Left colon (tissue), 2 donors: ENCODE measurements at regions of chr7 and their contacts with region 1.

Region 1: GRCh38 chr7:120272261-120272660 is 714 bp upstream of the KCND2 start:
- DNase-seq: no peak
- ATAC-seq: no peak

Region 2: GRCh38 chr7:119935418-119936025 is 336.7 kb before region 1 on chr7:
- intact Hi-C with region 1: loop called in 1 of 2 experiments (anchors 10 kb)
- DNase-seq: no peak
- ATAC-seq: no peak